ENCODE measurements at regions of chr6 and their contacts with region 1.

Region 1: DNA sequence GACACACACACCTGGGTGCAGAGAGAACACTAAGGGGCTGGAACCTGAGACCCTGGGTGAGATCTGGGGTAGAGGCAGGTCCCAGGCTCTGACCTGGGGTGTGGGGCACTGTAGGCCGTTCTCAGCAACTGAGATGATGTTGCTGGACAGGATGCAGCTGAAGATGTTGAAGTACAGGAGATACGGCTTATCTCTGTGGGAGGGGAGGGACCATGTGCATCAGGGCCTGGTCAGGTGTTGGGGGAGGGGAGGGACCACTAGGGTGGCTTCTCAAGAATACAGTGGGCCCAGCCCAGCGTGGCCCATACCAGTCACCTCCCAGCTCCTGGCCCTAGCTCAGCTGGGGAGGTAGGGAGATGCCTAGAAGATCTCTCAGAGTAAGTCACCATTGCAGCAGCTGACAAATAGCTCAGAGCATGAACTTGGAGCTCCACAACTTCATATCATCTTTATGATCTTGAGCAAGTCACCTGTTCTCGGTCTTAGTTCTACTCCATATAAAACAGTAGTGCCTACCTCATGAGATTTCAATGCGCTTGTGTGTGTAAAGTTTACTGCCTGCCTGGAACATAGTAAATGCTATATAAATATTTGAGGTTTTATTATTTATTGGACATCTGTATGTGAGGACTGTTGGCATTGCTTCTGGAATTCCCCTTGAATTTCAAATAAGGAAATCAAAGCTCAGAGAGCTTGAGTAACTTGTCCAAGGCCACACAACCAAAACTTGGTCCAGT is 3.8 kb downstream of the SLC44A4 start:
- H3K4me3 ChIP-seq: no peak overlapping the region
- H3K27ac ChIP-seq: no peak overlapping the region
- H3K4me1 ChIP-seq: no peaks in the 10 kb centered on the region; the same call in 1 of the 2 replicates
- CTCF ChIP-seq: no peak

Region 2: DNA sequence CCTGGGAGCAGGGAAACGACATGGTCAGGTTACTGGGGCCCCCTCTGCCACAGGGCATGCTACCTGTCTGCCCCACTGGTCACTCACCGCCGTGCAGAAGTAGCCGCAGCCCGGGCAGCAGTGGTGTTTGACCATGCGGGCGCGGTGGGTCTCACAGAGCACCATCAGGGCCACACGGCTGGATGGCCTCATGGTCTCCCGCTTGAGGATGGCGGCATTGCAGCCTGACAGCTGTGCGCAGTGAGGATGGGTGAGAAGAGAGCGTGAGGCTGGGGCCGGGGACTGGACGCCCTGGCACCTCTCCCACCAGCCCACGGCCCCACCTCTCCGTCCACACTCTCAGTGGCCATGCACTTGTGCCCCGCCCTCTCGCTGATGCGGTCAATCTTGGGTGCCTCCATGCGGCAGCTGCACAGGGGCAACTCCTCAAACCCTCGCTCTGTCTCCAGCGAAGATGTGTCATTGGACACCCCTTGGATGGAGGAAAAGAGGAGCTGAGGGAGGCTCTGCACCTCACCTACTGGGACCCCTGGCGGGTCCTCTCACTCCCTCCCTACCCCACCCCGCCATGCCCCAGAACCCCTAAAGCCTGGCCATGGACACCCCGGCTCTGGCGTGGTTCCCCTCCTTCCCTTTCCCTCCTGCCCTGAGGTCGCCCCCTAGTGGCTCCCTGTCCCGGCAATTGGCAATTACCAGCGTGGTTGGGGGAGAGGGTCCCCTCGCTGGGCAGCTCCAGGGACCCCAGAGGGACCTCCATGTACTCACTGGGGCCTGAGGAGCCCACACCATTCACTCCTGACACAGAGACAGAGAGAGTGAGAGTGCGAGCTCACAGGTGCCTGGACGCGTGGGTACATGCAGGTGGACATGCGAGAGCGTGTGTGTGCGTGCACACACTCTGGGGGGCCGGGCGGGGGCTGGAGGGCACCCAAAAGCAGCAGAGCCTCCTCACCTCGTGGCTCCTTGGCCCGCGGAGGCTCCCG is 13.6 kb after region 1 on chr6:
- CTCF ChIA-PET with region 1: interaction called, 19 read pairs
- POLR2A ChIA-PET with region 1: no interaction called
- H3K4me3 ChIP-seq: no peak overlapping the region
- H3K27ac ChIP-seq: no peak overlapping the region
- H3K4me1 ChIP-seq: no peaks in the 10 kb centered on the region
- CTCF ChIP-seq: peak; percentile 63; the same call in 1 of the 2 replicates

Region 3: GRCh38 chr6:32148289-32149091 is 273.5 kb after region 1 on chr6:
- CTCF ChIA-PET with region 1: no interaction called
- POLR2A ChIA-PET with region 1: no interaction called
- H3K4me3 ChIP-seq: no peak overlapping the region
- H3K27ac ChIP-seq: no peak overlapping the region
- H3K4me1 ChIP-seq: peaks cover 9% of the 10 kb centered on the region; the same call in 1 of the 2 replicates
- CTCF ChIP-seq: no peak